ENCODE measurements at regions of chr14 and their contacts with region 1.

Region 1: DNA sequence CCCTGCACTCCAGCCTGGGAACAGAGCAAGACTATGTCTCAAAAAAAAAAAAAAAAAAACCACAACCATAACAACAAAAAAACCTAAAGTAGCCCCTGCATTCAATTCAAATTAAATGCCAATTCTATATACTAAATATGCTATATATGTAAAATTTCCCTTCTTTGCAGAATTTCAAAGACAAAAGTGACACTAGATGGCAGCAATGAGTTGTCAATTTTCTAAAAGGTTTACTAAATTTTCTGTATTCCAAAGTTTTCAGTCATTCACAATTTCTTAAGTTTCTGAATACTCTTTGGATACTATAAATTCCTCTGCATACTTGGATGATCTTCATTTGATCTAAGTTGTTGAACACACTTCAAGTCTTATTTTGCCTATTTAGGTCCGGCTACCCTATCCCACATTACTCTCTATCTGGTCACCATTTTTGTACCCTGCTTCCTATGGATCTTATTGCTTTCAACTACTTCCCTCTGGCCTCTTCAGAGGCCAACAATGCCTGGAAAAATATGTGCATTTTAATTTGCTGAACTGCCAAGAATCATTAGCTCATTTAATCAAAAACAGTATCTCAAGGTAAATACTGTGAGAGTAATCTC is 27.9 kb downstream of the HNRNPC start:
- DNase-seq: no peak
- CTCF ChIP-seq: peak; percentile 27

Region 2: GRCh38 chr14:21145437-21145836 is 95.9 kb before region 1 on chr14:
- CTCF ChIA-PET with region 1: no interaction called
- POLR2A ChIA-PET with region 1: no interaction called
- DNase-seq: no peak
- CTCF ChIP-seq: no peak

Region 3: DNA sequence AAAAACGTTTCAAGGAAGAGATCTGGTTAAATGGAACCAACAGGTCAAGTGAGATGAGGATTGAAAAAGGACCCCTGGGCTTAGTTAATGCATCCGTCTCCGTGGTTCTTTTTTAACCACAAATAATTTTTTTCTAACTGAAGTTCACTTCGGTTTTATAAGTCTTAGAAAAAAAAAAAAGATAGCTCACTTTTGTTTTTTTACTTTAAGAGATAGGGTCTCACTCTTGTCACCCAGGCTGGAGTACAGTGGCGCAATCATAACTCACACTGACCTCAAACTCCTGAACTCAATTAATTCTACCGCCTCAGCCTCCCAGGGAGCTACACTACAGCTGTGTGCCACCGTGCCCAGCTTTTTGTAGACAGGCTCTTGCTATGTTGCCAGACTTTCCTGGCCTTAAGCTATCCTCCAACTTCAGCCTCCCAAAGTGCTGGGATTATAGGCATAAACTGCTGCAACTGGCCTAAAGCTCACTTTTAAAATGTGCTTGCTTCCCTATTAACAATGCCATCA is 16.1 kb after region 1 on chr14:
- CTCF ChIA-PET with region 1: interaction called, 10 read pairs
- POLR2A ChIA-PET with region 1: interaction called, 15 read pairs
- DNase-seq: no peak
- CTCF ChIP-seq: no peak

Region 4: GRCh38 chr14:21263656-21264411 is 22.5 kb after region 1 on chr14:
- CTCF ChIA-PET with region 1: no interaction called
- POLR2A ChIA-PET with region 1: interaction called, 12 read pairs
- DNase-seq: peak; percentile 57
- CTCF ChIP-seq: no peak

Measured in GM10248 (cell line).